ENCODE measurements at regions of chr17 and their contacts with region 1.

Region 1: GRCh38 chr17:14337596-14338079 is 36.8 kb downstream of the HS3ST3B1 start:
- DNase-seq: peak; percentile 85
- H3K4me3 Mint-ChIP-seq: no peak overlapping the region
- H3K27ac Mint-ChIP-seq: peak overlapping the region; percentile 74
- H3K4me1 Mint-ChIP-seq: peaks cover 84% of the 10 kb centered on the region
- H3K27me3 Mint-ChIP-seq: no peaks in the 10 kb centered on the region

Region 2: GRCh38 chr17:14308965-14309879 is 28.4 kb before region 1 on chr17:
- CTCF ChIA-PET with region 1: interaction called, 3 read pairs
- POLR2A ChIA-PET with region 1: interaction called, 3 read pairs
- intact Hi-C with region 1: loop called (anchors 1 kb)
- DNase-seq: peak; percentile 96
- H3K4me3 Mint-ChIP-seq: peak overlapping the region; percentile 77
- H3K27ac Mint-ChIP-seq: peak overlapping the region; percentile 69
- H3K4me1 Mint-ChIP-seq: peaks cover 76% of the 10 kb centered on the region
- H3K27me3 Mint-ChIP-seq: no peaks in the 10 kb centered on the region

Region 3: DNA sequence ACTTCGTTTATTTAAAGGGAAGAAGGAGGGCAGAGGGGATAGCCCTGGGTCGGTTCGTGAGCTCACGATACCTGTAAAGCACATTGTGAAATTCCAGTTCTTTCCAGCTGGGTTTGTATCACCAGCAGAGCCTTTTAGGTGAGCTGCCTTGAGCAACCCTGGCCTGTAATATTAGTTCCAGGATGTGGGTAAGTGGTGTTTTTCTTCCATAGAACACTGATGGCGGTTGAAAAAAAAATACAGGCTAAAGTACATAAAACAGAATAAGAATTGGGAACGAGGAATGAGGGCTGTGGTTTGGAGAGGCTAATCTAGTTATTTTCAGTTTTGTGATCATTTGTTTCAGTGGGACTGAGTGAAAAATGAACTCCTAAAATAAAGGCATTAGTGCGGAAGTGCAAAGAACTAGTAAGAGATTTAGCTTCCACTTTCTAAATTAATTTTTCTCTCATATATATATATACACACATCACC is 16.1 kb before region 1 on chr17:
- CTCF ChIA-PET with region 1: interaction called, 3 read pairs
- POLR2A ChIA-PET with region 1: interaction called, 10 read pairs
- intact Hi-C with region 1: loop called (anchors 1 kb)
- DNase-seq: no peak
- H3K4me3 Mint-ChIP-seq: peak overlapping the region; percentile 11
- H3K27ac Mint-ChIP-seq: peak overlapping the region; percentile 66
- H3K4me1 Mint-ChIP-seq: peaks cover 80% of the 10 kb centered on the region
- H3K27me3 Mint-ChIP-seq: no peaks in the 10 kb centered on the region

Region 4: GRCh38 chr17:14351493-14351892 is 13.9 kb after region 1 on chr17:
- CTCF ChIA-PET with region 1: no interaction called
- POLR2A ChIA-PET with region 1: interaction called, 4 read pairs
- intact Hi-C with region 1: loop called (anchors 1 kb)
- DNase-seq: no peak
- H3K4me3 Mint-ChIP-seq: no peak overlapping the region
- H3K27ac Mint-ChIP-seq: no peak overlapping the region
- H3K4me1 Mint-ChIP-seq: peaks cover 25% of the 10 kb centered on the region
- H3K27me3 Mint-ChIP-seq: no peaks in the 10 kb centered on the region

Region 5: DNA sequence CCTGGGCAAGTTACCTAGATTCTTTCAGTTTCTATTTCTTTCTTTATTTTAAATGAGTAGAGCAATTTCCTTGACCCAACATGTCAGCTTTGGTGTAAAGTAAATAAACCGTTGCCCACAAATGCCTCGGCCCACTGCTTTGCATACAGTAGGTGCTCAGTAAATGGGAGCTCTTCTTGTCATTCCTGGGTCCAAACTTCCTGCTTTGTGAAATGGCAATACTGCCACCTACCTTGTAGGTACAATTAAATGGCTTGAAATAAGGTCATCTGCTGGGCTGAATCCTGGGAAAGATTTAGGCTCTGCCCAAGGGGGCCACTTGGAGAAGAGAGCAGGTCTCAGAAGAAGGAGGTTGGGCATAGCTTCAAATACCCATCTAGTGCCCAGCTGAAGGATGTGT is 216.2 kb after region 1 on chr17:
- CTCF ChIA-PET with region 1: no interaction called
- POLR2A ChIA-PET with region 1: no interaction called
- intact Hi-C with region 1: loop called (anchors 10 kb)
- DNase-seq: no peak
- H3K4me3 Mint-ChIP-seq: no peak overlapping the region
- H3K27ac Mint-ChIP-seq: no peak overlapping the region
- H3K4me1 Mint-ChIP-seq: peaks cover 2% of the 10 kb centered on the region
- H3K27me3 Mint-ChIP-seq: peaks cover under 1% of the 10 kb centered on the region